ENCODE measurements at regions of chr12 and their contacts with region 1.

Region 1: GRCh38 chr12:64796208-64796845 is 28.1 kb upstream of the TBC1D30 start:
- DNase-seq: peak; percentile 75
- ATAC-seq: peak; percentile 91
- H3K4me3 Mint-ChIP-seq: no peak overlapping the region
- H3K27ac Mint-ChIP-seq: no peak overlapping the region
- H3K4me1 Mint-ChIP-seq: no peaks in the 10 kb centered on the region
- H3K27me3 Mint-ChIP-seq: peaks cover 14% of the 10 kb centered on the region

Region 2: GRCh38 chr12:64780531-64781279 is 15.6 kb before region 1 on chr12:
- CTCF ChIA-PET with region 1: interaction called, 35 read pairs
- POLR2A ChIA-PET with region 1: no interaction called
- intact Hi-C with region 1: no loop called
- DNase-seq: peak; percentile 33
- ATAC-seq: peak; percentile 57
- H3K4me3 Mint-ChIP-seq: peak overlapping the region; percentile 62
- H3K27ac Mint-ChIP-seq: no peak overlapping the region
- H3K4me1 Mint-ChIP-seq: peaks cover 16% of the 10 kb centered on the region
- H3K27me3 Mint-ChIP-seq: peaks cover 64% of the 10 kb centered on the region

Region 3: GRCh38 chr12:64785838-64786237 is 10.5 kb before region 1 on chr12:
- CTCF ChIA-PET with region 1: interaction called, 35 read pairs
- POLR2A ChIA-PET with region 1: no interaction called
- intact Hi-C with region 1: no loop called
- DNase-seq: no peak
- ATAC-seq: no peak
- H3K4me3 Mint-ChIP-seq: no peak overlapping the region
- H3K27ac Mint-ChIP-seq: no peak overlapping the region
- H3K4me1 Mint-ChIP-seq: peaks cover 12% of the 10 kb centered on the region
- H3K27me3 Mint-ChIP-seq: peaks cover 34% of the 10 kb centered on the region

Region 4: DNA sequence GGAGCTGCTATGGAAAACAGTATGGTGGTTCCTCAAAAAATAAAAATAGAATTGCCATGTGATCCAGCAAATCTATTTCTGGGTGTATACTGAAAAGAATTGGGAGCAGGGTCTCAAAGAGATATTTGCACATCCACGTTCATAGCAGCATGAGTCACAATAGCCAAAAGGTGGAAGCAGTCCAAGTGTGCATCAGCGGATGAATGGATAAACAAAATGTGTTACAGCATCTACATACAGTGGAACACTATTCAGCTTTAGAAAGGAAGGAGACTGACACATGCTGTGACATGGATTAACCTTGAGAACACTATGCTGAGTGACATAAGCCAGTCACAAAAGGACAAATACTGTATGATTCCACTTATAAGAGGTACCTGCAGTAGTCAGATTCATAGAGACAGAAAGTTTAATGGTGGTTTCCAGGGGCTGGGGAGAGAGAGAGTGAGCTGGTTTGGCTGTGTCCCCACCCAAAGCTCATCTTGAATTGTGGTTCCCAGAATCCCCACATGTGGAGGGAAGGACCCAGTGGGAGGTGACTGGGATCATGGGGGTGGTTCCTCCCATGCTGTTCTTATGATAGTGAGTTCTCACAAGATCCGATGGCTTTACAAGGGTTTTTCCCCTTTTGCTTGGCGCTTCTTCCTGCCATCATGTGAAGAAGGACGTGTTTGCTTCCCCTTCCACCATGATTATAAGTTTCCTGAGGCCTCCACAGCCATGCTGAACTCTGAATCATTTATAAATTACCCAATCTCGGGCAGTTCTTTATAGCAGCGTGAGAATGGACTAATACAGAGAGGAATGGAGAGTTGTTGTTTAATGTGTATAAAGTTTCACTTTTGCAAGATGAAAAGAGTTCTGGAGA is 10.5 kb after region 1 on chr12:
- CTCF ChIA-PET with region 1: interaction called, 12 read pairs
- POLR2A ChIA-PET with region 1: no interaction called
- intact Hi-C with region 1: no loop called
- DNase-seq: no peak
- ATAC-seq: no peak
- H3K4me3 Mint-ChIP-seq: no peak overlapping the region
- H3K27ac Mint-ChIP-seq: no peak overlapping the region
- H3K4me1 Mint-ChIP-seq: peaks cover 2% of the 10 kb centered on the region
- H3K27me3 Mint-ChIP-seq: peaks cover 43% of the 10 kb centered on the region

Region 5: GRCh38 chr12:65121049-65121955 is 325.0 kb after region 1 on chr12 and contains the start of gene WIF1:
- CTCF ChIA-PET with region 1: interaction called, 11 read pairs
- POLR2A ChIA-PET with region 1: no interaction called
- intact Hi-C with region 1: loop called (anchors 2 to 5 kb)
- DNase-seq: peak; percentile 56
- ATAC-seq: peak; percentile 82
- H3K4me3 Mint-ChIP-seq: peak within 1 kb of the TSS; percentile 32
- H3K27ac Mint-ChIP-seq: no peak within 1 kb of the TSS
- H3K4me1 Mint-ChIP-seq: peaks cover 6% of the 10 kb centered on the region
- H3K27me3 Mint-ChIP-seq: peaks cover 31% of the 10 kb centered on the region
- total RNA-seq, gene WIF1: not detected

Region 6: DNA sequence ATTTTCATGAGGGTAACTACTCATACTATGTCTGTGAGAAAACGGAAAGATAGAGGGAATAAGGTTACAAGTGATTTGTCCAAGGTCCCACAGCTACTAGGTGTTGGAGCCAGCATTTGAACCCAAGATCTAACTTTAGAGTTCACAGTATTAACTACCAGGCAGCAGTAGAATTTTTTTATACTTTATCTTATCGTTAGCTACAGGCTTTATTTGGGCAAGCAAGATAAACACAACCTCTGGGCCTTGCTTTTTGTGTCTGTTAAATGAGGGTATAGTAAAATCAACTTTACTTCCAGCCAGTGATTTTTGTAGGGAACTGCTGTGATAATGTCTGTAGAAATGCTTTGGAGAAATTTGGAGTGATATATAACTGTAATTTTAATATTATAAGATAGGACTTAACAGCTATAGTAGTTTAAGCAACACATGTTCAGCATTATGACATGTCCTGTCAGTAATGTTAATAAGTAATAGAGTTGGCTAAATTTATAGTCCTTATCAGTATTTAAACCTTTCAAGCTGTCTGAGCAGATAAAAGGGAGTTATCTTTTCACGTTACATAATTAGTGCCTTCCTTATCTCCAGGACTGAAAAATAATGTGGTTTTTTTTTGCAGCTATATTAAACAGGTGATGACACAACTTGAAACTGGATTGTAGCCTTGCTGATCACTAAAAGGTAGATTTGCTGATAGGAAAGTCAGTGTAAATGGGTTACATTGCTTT is 385.8 kb after region 1 on chr12:
- CTCF ChIA-PET with region 1: no interaction called
- POLR2A ChIA-PET with region 1: no interaction called
- intact Hi-C with region 1: no loop called
- DNase-seq: no peak
- ATAC-seq: no peak
- H3K4me3 Mint-ChIP-seq: no peak overlapping the region
- H3K27ac Mint-ChIP-seq: no peak overlapping the region
- H3K4me1 Mint-ChIP-seq: peaks cover 51% of the 10 kb centered on the region
- H3K27me3 Mint-ChIP-seq: no peaks in the 10 kb centered on the region

Measured in activated CD4-positive, alpha-beta T cell treated with anti-CD3 and anti-CD28 coated beads for 36 hours (primary cell).